ENCODE measurements at regions of chr19 and their contacts with region 1.

Region 1: GRCh38 chr19:53906211-53907192 is 2.6 kb upstream of the CACNG7 start:
- DNase-seq: peak; percentile 52 to 81 (median 73)
- ATAC-seq: peak; percentile 81
- H3K4me3 ChIP-seq: no peak overlapping the region
- H3K4me3 Mint-ChIP-seq: peak overlapping the region; percentile 29
- H3K27ac ChIP-seq: no peak overlapping the region
- H3K27ac Mint-ChIP-seq: no peak overlapping the region
- H3K4me1 ChIP-seq: peaks cover 25% of the 10 kb centered on the region
- H3K4me1 Mint-ChIP-seq: peaks cover 24% of the 10 kb centered on the region
- H3K27me3 ChIP-seq: peaks cover 39 to 42% of the 10 kb centered on the region in 2 experiments
- H3K27me3 Mint-ChIP-seq: peaks cover 73% of the 10 kb centered on the region
- CTCF ChIP-seq: peak; percentile 80

Region 2: DNA sequence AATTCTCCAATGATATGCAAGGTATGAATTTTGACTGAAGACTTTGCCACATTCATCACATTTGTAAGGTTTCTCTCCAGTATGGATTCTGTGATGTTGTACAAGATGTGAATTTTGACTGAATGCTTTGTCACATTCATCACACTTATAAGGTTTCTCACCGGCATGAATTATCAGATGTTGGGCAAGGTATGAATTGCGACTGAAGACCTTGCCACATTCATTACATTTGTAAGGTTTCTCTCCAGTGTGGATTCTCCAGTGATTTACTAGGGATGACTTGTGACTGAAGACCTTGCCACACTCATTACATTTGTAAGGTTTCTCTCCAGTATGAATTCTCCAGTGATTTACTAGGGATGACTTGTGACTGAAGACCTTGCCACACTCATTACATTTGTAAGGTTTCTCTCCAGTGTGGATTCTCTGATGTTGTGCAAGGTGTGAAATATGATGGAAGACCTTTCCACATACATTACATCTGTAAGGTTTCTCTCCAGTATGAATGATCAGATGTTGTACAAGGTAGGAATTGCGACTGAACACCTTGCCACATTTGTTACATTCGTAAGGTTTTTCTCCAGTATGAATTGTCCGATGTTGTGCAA is 1293.1 kb before region 1 on chr19:
- CTCF ChIA-PET with region 1: no interaction called
- POLR2A ChIA-PET with region 1: no interaction called
- intact Hi-C with region 1: no loop called
- DNase-seq: no peak
- ATAC-seq: no peak
- H3K4me3 ChIP-seq: no peak overlapping the region
- H3K4me3 Mint-ChIP-seq: no peak overlapping the region
- H3K27ac ChIP-seq: no peak overlapping the region
- H3K27ac Mint-ChIP-seq: no peak overlapping the region
- H3K4me1 ChIP-seq: no peaks in the 10 kb centered on the region
- H3K4me1 Mint-ChIP-seq: peaks cover 16% of the 10 kb centered on the region
- H3K27me3 ChIP-seq: no peaks in the 10 kb centered on the region
- H3K27me3 Mint-ChIP-seq: no peaks in the 10 kb centered on the region
- CTCF ChIP-seq: no peak

Region 3: DNA sequence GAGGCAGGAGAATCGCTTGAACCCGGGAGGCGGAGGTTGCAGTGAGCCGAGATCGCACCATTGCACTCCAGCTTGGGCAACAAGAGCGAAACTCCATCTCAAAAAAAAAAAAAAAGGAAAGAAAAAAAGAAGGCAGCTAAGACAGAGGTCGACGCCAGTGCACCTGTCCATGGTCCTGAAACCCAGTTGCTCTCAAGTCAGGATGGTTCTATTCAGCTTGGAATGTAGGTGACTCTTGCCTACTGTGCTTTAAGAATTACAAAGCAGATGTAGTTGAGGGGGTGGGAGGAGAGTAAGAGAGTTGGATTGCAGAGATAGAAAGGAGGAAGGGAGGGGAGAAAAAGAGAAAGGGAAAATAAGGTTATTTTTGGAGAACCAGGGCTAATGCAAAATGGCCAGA is 21.2 kb after region 1 on chr19:
- CTCF ChIA-PET with region 1: interaction called, 4 read pairs
- POLR2A ChIA-PET with region 1: no interaction called
- intact Hi-C with region 1: loop called in 1 of 2 experiments (anchors 2 kb)
- DNase-seq: peak in 7 of 9 experiments; percentile 3 to 64 (median 43)
- ATAC-seq: no peak
- H3K4me3 ChIP-seq: no peak overlapping the region
- H3K4me3 Mint-ChIP-seq: no peak overlapping the region
- H3K27ac ChIP-seq: no peak overlapping the region
- H3K27ac Mint-ChIP-seq: no peak overlapping the region
- H3K4me1 ChIP-seq: no peaks in the 10 kb centered on the region
- H3K4me1 Mint-ChIP-seq: no peaks in the 10 kb centered on the region
- H3K27me3 ChIP-seq: peaks cover 0 to 2% of the 10 kb centered on the region in 2 experiments
- H3K27me3 Mint-ChIP-seq: peaks cover 13% of the 10 kb centered on the region
- CTCF ChIP-seq: no peak

Measured in CD8-positive, alpha-beta T cell (primary cell).